ENCODE measurements at regions of chr9 and their contacts with region 1.

Region 1: GRCh38 chr9:134163353-134164196 is 789 bp downstream of the RNU6ATAC start:
- DNase-seq: peak; percentile 52 to 73 (median 71)
- ATAC-seq: no peak
- H3K4me3 ChIP-seq: no peak overlapping the region
- H3K4me3 Mint-ChIP-seq: no peak overlapping the region
- H3K27ac ChIP-seq: no peak overlapping the region
- H3K27ac Mint-ChIP-seq: peak overlapping the region in 1 of 9 donors; percentile 52
- H3K4me1 ChIP-seq: peaks cover 0 to 18% of the 10 kb centered on the region in 2 donors
- H3K4me1 Mint-ChIP-seq: peaks cover 0 to 28% (median 19%) of the 10 kb centered on the region in 7 donors
- H3K27me3 ChIP-seq: no peaks in the 10 kb centered on the region
- H3K27me3 Mint-ChIP-seq: no peaks in the 10 kb centered on the region

Region 2: GRCh38 chr9:132354637-132355355 is 1808.8 kb before region 1 on chr9 and contains the start of gene SETX:
- CTCF ChIA-PET with region 1: no interaction called
- POLR2A ChIA-PET with region 1: no interaction called
- intact Hi-C with region 1: loop called in 1 of 2 experiments (anchors 10 kb)
- DNase-seq: peak; percentile 80 to 96 (median 88)
- ATAC-seq: peak; percentile 95
- H3K4me3 ChIP-seq: peak within 1 kb of the TSS; percentile 96
- H3K4me3 Mint-ChIP-seq: peak within 1 kb of the TSS; percentile 78 to 97 (median 94)
- H3K27ac ChIP-seq: peak within 1 kb of the TSS; percentile 94
- H3K27ac Mint-ChIP-seq: peak within 1 kb of the TSS; percentile 68 to 99 (median 97)
- H3K4me1 ChIP-seq: peaks cover 35 to 39% of the 10 kb centered on the region in 2 donors
- H3K4me1 Mint-ChIP-seq: peaks cover 24 to 48% (median 45%) of the 10 kb centered on the region in 7 donors
- H3K27me3 ChIP-seq: no peaks in the 10 kb centered on the region
- H3K27me3 Mint-ChIP-seq: peaks cover 0 to 3% (median 0%) of the 10 kb centered on the region in 5 donors
- total RNA-seq, gene SETX: 52.0 to 83.2 (median 70.2) TPM

Region 3: DNA sequence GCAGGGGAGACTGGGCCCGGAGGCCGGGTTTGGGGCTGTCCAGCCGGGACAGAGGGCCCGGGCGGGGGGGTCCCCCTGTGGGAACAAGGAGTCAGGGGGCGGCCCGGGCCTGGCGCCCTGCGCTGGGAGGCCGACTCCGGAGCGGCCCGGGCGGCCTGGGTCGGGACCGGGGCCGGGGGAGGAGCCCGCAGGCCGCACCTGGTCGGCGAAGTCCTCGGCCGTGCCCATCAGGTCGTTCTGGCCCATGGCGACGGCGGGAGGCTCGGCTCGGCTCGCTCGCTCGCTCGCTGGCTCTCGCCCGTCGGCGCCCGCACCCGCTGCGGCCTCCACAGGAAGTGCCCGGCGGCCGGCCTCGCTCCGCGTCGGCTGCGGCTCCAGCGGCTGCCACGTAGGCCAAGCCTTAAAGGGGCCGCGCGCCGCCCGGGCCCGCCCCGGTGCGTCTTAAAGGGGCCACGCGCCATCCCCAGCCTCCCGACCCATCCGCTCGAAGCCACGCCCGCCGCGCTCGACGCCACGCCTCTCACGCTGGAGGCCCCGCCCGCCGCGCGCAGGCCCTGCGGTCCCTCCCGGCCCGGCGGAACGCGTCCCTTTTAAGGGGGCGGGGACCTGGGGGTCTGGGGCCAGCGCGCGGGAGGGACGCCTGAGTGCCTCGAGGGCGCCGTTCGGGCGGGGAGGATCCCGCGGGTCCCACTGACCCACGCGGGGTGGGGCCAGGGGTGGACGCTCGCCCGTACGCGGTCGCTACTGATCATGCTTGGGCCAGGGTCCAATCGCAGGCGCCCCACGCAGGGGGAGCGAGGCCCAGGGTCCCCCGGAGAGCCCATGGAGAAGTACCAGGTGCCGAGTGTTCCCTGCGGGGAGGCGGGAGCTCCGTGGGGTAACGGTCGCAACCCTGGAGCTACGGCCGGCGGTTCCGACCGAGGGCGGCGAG is 787.6 kb before region 1 on chr9 and contains the starts of genes STKLD1 and SURF4:
- CTCF ChIA-PET with region 1: no interaction called
- POLR2A ChIA-PET with region 1: no interaction called
- intact Hi-C with region 1: loop called in 1 of 2 experiments (anchors 10 kb)
- DNase-seq: peak; percentile 86 to 99 (median 93)
- ATAC-seq: peak; percentile 95
- H3K4me3 ChIP-seq: peak within 1 kb of the TSS; percentile 58
- H3K4me3 Mint-ChIP-seq: peak within 1 kb of the TSS; percentile 84 to 98 (median 92)
- H3K27ac ChIP-seq: peak within 1 kb of the TSS; percentile 98
- H3K27ac Mint-ChIP-seq: peak within 1 kb of the TSS; percentile 72 to 99 (median 96)
- H3K4me1 ChIP-seq: peaks cover 31 to 38% of the 10 kb centered on the region in 2 donors
- H3K4me1 Mint-ChIP-seq: peaks cover 26 to 47% (median 34%) of the 10 kb centered on the region in 7 donors
- H3K27me3 ChIP-seq: no peaks in the 10 kb centered on the region
- H3K27me3 Mint-ChIP-seq: peaks cover 0 to 4% (median 0%) of the 10 kb centered on the region in 5 donors
- total RNA-seq, gene STKLD1: 1.1 to 1.8 (median 1.5) TPM
- total RNA-seq, gene SURF4: 72.5 to 196 (median 75.1) TPM

Region 4: DNA sequence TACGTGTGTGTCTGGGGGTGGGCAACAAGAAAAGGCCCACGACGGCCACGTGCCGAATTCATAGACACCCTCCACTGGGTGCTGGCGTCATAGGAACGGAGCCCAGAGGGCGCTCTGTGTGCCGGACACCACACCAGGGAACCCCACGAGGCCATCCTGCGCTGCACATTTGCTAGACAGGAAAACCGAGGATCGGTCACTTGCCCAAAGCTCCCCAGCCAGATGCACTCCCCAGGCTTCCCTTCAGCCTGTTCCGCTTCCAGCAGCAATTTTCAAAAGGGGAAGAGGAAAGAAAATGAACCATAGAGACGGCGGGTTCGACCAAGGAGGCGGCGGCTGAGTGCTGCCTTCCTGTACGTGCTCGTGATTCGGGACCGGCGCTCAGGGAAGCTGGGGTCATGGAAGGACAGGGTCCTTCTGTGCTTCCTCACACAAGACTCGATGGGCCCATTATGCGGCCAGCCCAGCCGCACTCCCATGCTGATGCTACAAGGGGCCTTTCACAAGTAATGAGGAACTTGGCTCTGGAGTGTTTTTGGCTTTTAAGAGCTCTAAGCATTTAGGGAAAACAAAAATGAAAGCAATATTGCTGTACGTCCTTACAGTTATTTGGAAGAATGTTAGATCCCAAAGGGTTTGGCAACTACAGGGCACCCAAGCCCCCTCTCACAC is 300.9 kb before region 1 on chr9:
- CTCF ChIA-PET with region 1: no interaction called
- POLR2A ChIA-PET with region 1: no interaction called
- intact Hi-C with region 1: no loop called
- DNase-seq: no peak
- ATAC-seq: peak; percentile 86
- H3K4me3 ChIP-seq: no peak overlapping the region
- H3K4me3 Mint-ChIP-seq: peak overlapping the region in 1 of 10 donors; percentile 47
- H3K27ac ChIP-seq: no peak overlapping the region
- H3K27ac Mint-ChIP-seq: no peak overlapping the region
- H3K4me1 ChIP-seq: no peaks in the 10 kb centered on the region
- H3K4me1 Mint-ChIP-seq: peaks cover 0 to 8% (median 4%) of the 10 kb centered on the region in 7 donors
- H3K27me3 ChIP-seq: no peaks in the 10 kb centered on the region
- H3K27me3 Mint-ChIP-seq: peaks cover 0 to 4% (median 0%) of the 10 kb centered on the region in 5 donors

Region 5: GRCh38 chr9:133992780-133993634 is 170.6 kb before region 1 on chr9:
- CTCF ChIA-PET with region 1: no interaction called
- POLR2A ChIA-PET with region 1: no interaction called
- intact Hi-C with region 1: loop called (anchors 1 kb)
- DNase-seq: peak; percentile 47 to 77 (median 63)
- ATAC-seq: peak; percentile 89
- H3K4me3 ChIP-seq: peak overlapping the region; percentile 77
- H3K4me3 Mint-ChIP-seq: peak overlapping the region; percentile 62 to 89 (median 76)
- H3K27ac ChIP-seq: peak overlapping the region; percentile 30
- H3K27ac Mint-ChIP-seq: no peak overlapping the region
- H3K4me1 ChIP-seq: peaks cover 9 to 12% of the 10 kb centered on the region in 2 donors
- H3K4me1 Mint-ChIP-seq: peaks cover 0 to 8% (median 0%) of the 10 kb centered on the region in 7 donors
- H3K27me3 ChIP-seq: no peaks in the 10 kb centered on the region
- H3K27me3 Mint-ChIP-seq: peaks cover 0 to 26% (median 4%) of the 10 kb centered on the region in 5 donors

Region 6: GRCh38 chr9:134111064-134111463 is 52.5 kb before region 1 on chr9:
- CTCF ChIA-PET with region 1: no interaction called
- POLR2A ChIA-PET with region 1: no interaction called
- intact Hi-C with region 1: no loop called
- DNase-seq: no peak
- ATAC-seq: no peak
- H3K4me3 ChIP-seq: no peak overlapping the region
- H3K4me3 Mint-ChIP-seq: no peak overlapping the region
- H3K27ac ChIP-seq: no peak overlapping the region
- H3K27ac Mint-ChIP-seq: no peak overlapping the region
- H3K4me1 ChIP-seq: no peaks in the 10 kb centered on the region
- H3K4me1 Mint-ChIP-seq: no peaks in the 10 kb centered on the region
- H3K27me3 ChIP-seq: no peaks in the 10 kb centered on the region
- H3K27me3 Mint-ChIP-seq: peaks cover 0 to 4% (median 0%) of the 10 kb centered on the region in 5 donors

Region 7: GRCh38 chr9:134135343-134136118 is 28.0 kb before region 1 on chr9 and contains the start of gene WDR5:
- CTCF ChIA-PET with region 1: interaction called, 9 read pairs
- POLR2A ChIA-PET with region 1: interaction called, 61 read pairs
- intact Hi-C with region 1: loop called (anchors 1 kb)
- DNase-seq: peak; percentile 85 to 97 (median 92)
- ATAC-seq: peak; percentile 96
- H3K4me3 ChIP-seq: peak within 1 kb of the TSS; percentile 94
- H3K4me3 Mint-ChIP-seq: peak within 1 kb of the TSS; percentile 88 to 98 (median 92)
- H3K27ac ChIP-seq: peak within 1 kb of the TSS; percentile 80
- H3K27ac Mint-ChIP-seq: peak within 1 kb of the TSS; percentile 84 to 93 (median 89)
- H3K4me1 ChIP-seq: peaks cover 19 to 28% of the 10 kb centered on the region in 2 donors
- H3K4me1 Mint-ChIP-seq: peaks cover 33 to 65% (median 49%) of the 10 kb centered on the region in 7 donors
- H3K27me3 ChIP-seq: no peaks in the 10 kb centered on the region
- H3K27me3 Mint-ChIP-seq: no peaks in the 10 kb centered on the region
- total RNA-seq, gene WDR5: 16.0 to 42.3 (median 30.9) TPM

Region 8: DNA sequence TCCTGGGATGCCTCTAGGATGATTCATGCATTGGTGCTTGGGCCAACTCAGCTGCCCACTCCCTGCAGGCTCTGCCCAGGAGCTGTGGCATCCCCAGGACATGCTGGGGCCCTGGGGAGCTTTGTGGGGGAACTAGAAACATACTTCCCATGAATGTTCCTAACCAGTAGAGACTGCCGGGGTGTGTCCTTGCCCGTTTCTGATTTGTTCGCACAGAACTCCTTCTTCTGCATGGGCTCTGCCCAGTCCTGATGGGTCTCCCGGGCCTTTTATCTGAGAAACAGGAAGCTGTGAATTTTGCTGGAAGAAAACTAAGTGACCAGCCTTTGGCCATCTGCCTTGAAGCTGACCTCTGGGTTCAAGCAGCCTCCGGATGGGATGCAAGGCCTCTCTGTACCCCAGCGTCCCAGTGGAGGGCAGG is 72.4 kb after region 1 on chr9:
- CTCF ChIA-PET with region 1: no interaction called
- POLR2A ChIA-PET with region 1: no interaction called
- intact Hi-C with region 1: no loop called
- DNase-seq: no peak
- ATAC-seq: no peak
- H3K4me3 ChIP-seq: no peak overlapping the region
- H3K4me3 Mint-ChIP-seq: no peak overlapping the region
- H3K27ac ChIP-seq: no peak overlapping the region
- H3K27ac Mint-ChIP-seq: peak overlapping the region in 1 of 9 donors; percentile 32
- H3K4me1 ChIP-seq: no peaks in the 10 kb centered on the region
- H3K4me1 Mint-ChIP-seq: no peaks in the 10 kb centered on the region
- H3K27me3 ChIP-seq: no peaks in the 10 kb centered on the region
- H3K27me3 Mint-ChIP-seq: peaks cover 0 to 4% (median 0%) of the 10 kb centered on the region in 5 donors

Region 9: GRCh38 chr9:134391314-134392231 is 228.0 kb after region 1 on chr9:
- CTCF ChIA-PET with region 1: interaction called, 4 read pairs
- POLR2A ChIA-PET with region 1: interaction called, 10 read pairs
- intact Hi-C with region 1: loop called (anchors 1 to 2 kb)
- DNase-seq: peak in 8 of 9 donors; percentile 43 to 85 (median 48)
- ATAC-seq: peak; percentile 72
- H3K4me3 ChIP-seq: peak overlapping the region; percentile 40
- H3K4me3 Mint-ChIP-seq: peak overlapping the region; percentile 61 to 80 (median 74)
- H3K27ac ChIP-seq: peak overlapping the region; percentile 79
- H3K27ac Mint-ChIP-seq: peak overlapping the region; percentile 75 to 96 (median 92)
- H3K4me1 ChIP-seq: peaks cover 50 to 51% of the 10 kb centered on the region in 2 donors
- H3K4me1 Mint-ChIP-seq: peaks cover 31 to 62% (median 48%) of the 10 kb centered on the region in 7 donors
- H3K27me3 ChIP-seq: no peaks in the 10 kb centered on the region
- H3K27me3 Mint-ChIP-seq: peaks cover 0 to 9% (median 0%) of the 10 kb centered on the region in 5 donors

Region 10: DNA sequence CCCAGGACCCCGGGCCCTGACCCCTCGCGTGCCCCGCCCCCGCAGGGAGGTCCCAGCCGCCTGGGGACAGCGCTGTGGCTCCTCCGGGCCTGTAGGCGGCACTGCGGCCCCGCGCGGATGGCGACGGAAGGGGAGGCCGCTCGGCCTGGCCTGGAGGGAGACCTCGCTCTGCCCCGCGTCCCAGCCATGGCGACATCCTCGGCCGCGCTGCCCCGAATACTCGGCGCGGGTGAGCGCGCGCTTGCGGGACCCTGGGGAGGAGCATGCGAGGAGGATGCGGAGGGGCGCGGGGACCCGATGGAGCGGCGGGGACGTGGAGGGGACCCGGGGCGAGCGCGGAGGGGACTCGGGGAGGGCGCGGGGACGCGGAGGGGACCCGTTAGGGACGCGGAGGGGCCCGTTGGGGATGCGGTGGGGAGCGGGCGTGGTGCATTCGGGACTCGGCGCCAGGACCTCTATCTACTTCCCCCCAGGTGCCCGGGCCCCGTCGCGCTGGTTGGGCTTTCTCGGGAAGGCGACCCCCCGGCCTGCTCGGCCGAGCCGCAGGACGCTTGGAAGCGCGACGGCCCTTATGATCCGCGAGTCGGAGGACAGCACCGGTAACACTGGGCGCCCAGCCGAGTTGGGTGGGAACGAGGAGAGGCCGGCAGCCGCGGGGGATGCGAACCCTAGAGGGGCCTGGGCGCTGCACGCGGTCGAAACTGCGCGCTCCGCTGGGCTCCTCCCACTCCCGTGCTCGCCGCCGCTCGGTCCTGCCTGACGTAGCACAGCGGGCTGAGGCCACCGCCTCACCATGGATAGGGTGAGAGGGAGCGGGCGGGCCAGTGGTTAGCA is 1337.2 kb after region 1 on chr9 and contains the start of gene MRPS2:
- CTCF ChIA-PET with region 1: no interaction called
- POLR2A ChIA-PET with region 1: no interaction called
- intact Hi-C with region 1: loop called in 1 of 2 experiments (anchors 10 kb)
- DNase-seq: peak; percentile 62 to 93 (median 80)
- ATAC-seq: peak; percentile 97
- H3K4me3 ChIP-seq: peak within 1 kb of the TSS; percentile 91
- H3K4me3 Mint-ChIP-seq: peak within 1 kb of the TSS; percentile 80 to 95 (median 88)
- H3K27ac ChIP-seq: peak within 1 kb of the TSS; percentile 77
- H3K27ac Mint-ChIP-seq: peak within 1 kb of the TSS in 8 of 9 donors; percentile 11 to 96 (median 81)
- H3K4me1 ChIP-seq: peaks cover 10 to 14% of the 10 kb centered on the region in 2 donors
- H3K4me1 Mint-ChIP-seq: peaks cover 12 to 41% (median 18%) of the 10 kb centered on the region in 7 donors
- H3K27me3 ChIP-seq: no peaks in the 10 kb centered on the region
- H3K27me3 Mint-ChIP-seq: no peaks in the 10 kb centered on the region
- total RNA-seq, gene MRPS2: 19.4 to 32.3 (median 28.3) TPM